ENCODE measurements at regions of chr3 and their contacts with region 1.

Region 1: GRCh38 chr3:76985645-76986044 is 54.3 kb upstream of the ROBO2 start:
- DNase-seq: no peak
- H3K4me3 ChIP-seq: no peak overlapping the region
- H3K4me3 Mint-ChIP-seq: no peak overlapping the region
- H3K27ac ChIP-seq: no peak overlapping the region
- H3K27ac Mint-ChIP-seq: no peak overlapping the region
- H3K4me1 ChIP-seq: no peaks in the 10 kb centered on the region
- H3K4me1 Mint-ChIP-seq: no peaks in the 10 kb centered on the region
- H3K27me3 ChIP-seq: no peaks in the 10 kb centered on the region
- H3K27me3 Mint-ChIP-seq: peaks cover 0 to 1% (median 0%) of the 10 kb centered on the region in 3 donors
- CTCF ChIP-seq: no peak

Region 2: GRCh38 chr3:76527773-76528172 is 457.9 kb before region 1 on chr3:
- intact Hi-C with region 1: no loop called
- DNase-seq: no peak
- H3K4me3 ChIP-seq: no peak overlapping the region
- H3K4me3 Mint-ChIP-seq: no peak overlapping the region
- H3K27ac ChIP-seq: no peak overlapping the region
- H3K27ac Mint-ChIP-seq: no peak overlapping the region
- H3K4me1 ChIP-seq: no peaks in the 10 kb centered on the region
- H3K4me1 Mint-ChIP-seq: no peaks in the 10 kb centered on the region
- H3K27me3 ChIP-seq: no peaks in the 10 kb centered on the region
- H3K27me3 Mint-ChIP-seq: no peaks in the 10 kb centered on the region
- CTCF ChIP-seq: no peak

Region 3: GRCh38 chr3:76694063-76694462 is 291.6 kb before region 1 on chr3:
- intact Hi-C with region 1: no loop called
- DNase-seq: no peak
- H3K4me3 ChIP-seq: no peak overlapping the region
- H3K4me3 Mint-ChIP-seq: no peak overlapping the region
- H3K27ac ChIP-seq: no peak overlapping the region
- H3K27ac Mint-ChIP-seq: no peak overlapping the region
- H3K4me1 ChIP-seq: no peaks in the 10 kb centered on the region
- H3K4me1 Mint-ChIP-seq: no peaks in the 10 kb centered on the region
- H3K27me3 ChIP-seq: no peaks in the 10 kb centered on the region
- H3K27me3 Mint-ChIP-seq: peaks cover 0 to 4% (median 0%) of the 10 kb centered on the region in 3 donors
- CTCF ChIP-seq: no peak

Region 4: GRCh38 chr3:76815561-76815960 is 170.1 kb before region 1 on chr3:
- intact Hi-C with region 1: no loop called
- DNase-seq: no peak
- H3K4me3 ChIP-seq: no peak overlapping the region
- H3K4me3 Mint-ChIP-seq: no peak overlapping the region
- H3K27ac ChIP-seq: no peak overlapping the region
- H3K27ac Mint-ChIP-seq: no peak overlapping the region
- H3K4me1 ChIP-seq: no peaks in the 10 kb centered on the region
- H3K4me1 Mint-ChIP-seq: no peaks in the 10 kb centered on the region
- H3K27me3 ChIP-seq: no peaks in the 10 kb centered on the region
- H3K27me3 Mint-ChIP-seq: no peaks in the 10 kb centered on the region
- CTCF ChIP-seq: no peak

Region 5: DNA sequence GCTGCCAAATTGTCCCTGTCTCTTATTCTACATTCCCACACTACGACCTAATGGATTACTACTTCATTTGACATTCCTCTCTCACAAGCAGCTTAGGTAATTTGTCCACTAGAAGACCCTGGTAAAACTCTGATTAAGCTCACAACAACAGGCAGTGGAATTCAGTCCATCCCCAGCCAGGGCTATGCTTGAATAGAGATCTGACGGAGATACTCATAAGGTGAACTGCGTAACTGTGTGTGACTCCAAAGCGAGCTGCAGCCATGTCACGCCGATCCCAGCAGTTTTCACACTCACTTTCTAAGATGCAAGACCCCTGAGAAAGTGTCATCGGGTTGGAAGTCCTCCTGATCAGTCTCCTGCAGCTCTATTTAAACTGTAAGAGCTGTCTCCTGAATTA is 28.6 kb after region 1 on chr3:
- intact Hi-C with region 1: loop called in 1 of 2 experiments (anchors 2 kb)
- DNase-seq: no peak
- H3K4me3 ChIP-seq: no peak overlapping the region
- H3K4me3 Mint-ChIP-seq: no peak overlapping the region
- H3K27ac ChIP-seq: no peak overlapping the region
- H3K27ac Mint-ChIP-seq: peak overlapping the region in 1 of 7 donors; percentile 1
- H3K4me1 ChIP-seq: no peaks in the 10 kb centered on the region
- H3K4me1 Mint-ChIP-seq: no peaks in the 10 kb centered on the region
- H3K27me3 ChIP-seq: no peaks in the 10 kb centered on the region
- H3K27me3 Mint-ChIP-seq: no peaks in the 10 kb centered on the region
- CTCF ChIP-seq: no peak

Region 6: GRCh38 chr3:77028005-77028404 is 42.4 kb after region 1 on chr3:
- intact Hi-C with region 1: no loop called
- DNase-seq: no peak
- H3K4me3 ChIP-seq: no peak overlapping the region
- H3K4me3 Mint-ChIP-seq: no peak overlapping the region
- H3K27ac ChIP-seq: no peak overlapping the region
- H3K27ac Mint-ChIP-seq: no peak overlapping the region
- H3K4me1 ChIP-seq: no peaks in the 10 kb centered on the region
- H3K4me1 Mint-ChIP-seq: no peaks in the 10 kb centered on the region
- H3K27me3 ChIP-seq: no peaks in the 10 kb centered on the region
- H3K27me3 Mint-ChIP-seq: peaks cover 0 to 3% (median 0%) of the 10 kb centered on the region in 3 donors
- CTCF ChIP-seq: no peak